Activated CD4-positive, alpha-beta T cell treated with anti-CD3 and anti-CD28 coated beads for 36 hours (primary cell): ENCODE measurements at regions of chr10 and their contacts with region 1.

Region 1: DNA sequence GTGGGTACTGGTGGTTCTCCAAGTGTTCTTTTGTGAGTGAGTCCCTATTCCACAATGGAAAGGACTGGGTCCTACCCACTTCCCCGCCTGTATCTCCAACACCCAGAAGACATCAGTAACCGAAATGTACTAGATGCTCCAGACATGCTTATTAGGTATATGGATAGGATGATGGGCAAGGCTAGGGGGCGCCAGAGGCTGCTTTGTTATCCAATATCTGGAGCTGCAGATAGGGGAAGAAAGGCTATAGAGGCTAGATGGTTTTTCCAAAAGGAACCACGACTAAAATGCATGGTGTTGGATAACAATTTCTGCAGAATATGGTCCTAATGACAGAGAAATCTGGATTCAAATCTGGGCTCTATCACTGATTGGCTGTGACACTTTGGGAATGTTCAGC is 56.2 kb upstream of the TM9SF3 start:
- DNase-seq: peak; percentile 88
- ATAC-seq: peak; percentile 80
- H3K4me3 Mint-ChIP-seq: no peak overlapping the region
- H3K27ac Mint-ChIP-seq: no peak overlapping the region
- H3K4me1 Mint-ChIP-seq: peaks cover 22% of the 10 kb centered on the region
- H3K27me3 Mint-ChIP-seq: no peaks in the 10 kb centered on the region

Region 2: DNA sequence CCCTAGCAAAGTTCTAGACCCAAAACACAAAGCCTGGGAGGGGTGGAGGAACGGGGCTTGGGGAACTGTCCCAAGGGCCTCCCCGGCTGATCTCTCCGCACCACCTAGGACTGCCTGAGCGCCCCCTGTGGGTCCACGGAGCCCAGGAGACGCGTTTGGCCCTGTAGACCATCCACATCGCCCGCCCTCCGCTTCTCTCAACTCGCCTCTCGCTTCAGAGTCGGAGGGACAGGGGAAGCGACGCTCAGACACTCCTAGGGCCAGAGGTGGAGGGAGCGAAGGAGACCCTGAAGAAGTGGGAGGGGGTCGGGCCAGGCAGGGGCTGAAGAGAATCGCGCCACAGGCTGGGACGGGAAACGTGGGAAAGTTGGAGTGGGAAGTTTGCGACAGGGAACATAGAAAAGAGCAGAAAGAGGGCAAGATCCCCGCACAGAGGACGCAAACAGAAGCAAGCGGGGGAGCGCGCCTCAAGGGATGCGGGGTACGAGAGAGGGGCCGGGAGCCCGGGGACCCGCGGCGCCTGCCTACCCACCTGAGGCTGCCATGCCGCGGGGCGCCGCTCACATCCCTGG is 77.0 kb after region 1 on chr10:
- CTCF ChIA-PET with region 1: no interaction called
- POLR2A ChIA-PET with region 1: no interaction called
- intact Hi-C with region 1: loop called (anchors 1 to 2 kb)
- DNase-seq: peak; percentile 77
- ATAC-seq: peak; percentile 68
- H3K4me3 Mint-ChIP-seq: peak overlapping the region; percentile 93
- H3K27ac Mint-ChIP-seq: peak overlapping the region; percentile 84
- H3K4me1 Mint-ChIP-seq: peaks cover 12% of the 10 kb centered on the region
- H3K27me3 Mint-ChIP-seq: peaks cover 2% of the 10 kb centered on the region

Region 3: GRCh38 chr10:96765406-96766240 is 122.7 kb after region 1 on chr10:
- CTCF ChIA-PET with region 1: no interaction called
- POLR2A ChIA-PET with region 1: no interaction called
- intact Hi-C with region 1: loop called in 1 of 2 experiments (anchors 1 kb)
- DNase-seq: peak; percentile 88
- ATAC-seq: peak; percentile 96
- H3K4me3 Mint-ChIP-seq: no peak overlapping the region
- H3K27ac Mint-ChIP-seq: no peak overlapping the region
- H3K4me1 Mint-ChIP-seq: no peaks in the 10 kb centered on the region
- H3K27me3 Mint-ChIP-seq: no peaks in the 10 kb centered on the region

Region 4: DNA sequence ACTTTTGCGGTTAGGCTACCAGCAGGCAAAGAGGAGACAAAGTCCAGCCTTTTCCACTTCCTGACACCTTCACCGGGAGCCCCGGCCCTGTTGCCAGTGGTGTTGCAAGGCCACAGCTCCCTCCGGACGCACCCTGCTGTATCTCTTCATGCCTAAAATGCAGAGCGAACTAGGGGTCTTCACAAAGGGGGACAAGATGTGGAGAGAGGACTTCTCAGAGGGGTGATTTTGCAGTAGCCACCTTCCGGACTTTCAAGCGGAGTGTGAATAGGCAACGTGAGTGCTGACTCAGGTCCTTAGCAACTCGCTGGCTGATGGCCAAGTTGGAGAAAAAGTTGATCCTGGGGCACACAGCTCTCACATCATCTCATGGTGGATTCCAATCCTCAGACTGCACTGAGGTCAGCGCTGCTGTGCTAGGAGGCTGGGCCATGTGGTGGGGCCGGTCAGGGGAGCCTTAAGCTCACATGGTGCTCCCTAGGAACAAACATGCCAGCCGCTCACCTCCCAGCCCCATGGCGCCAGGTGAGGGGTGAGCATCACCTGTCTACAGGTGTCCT is 355.4 kb after region 1 on chr10:
- CTCF ChIA-PET with region 1: no interaction called
- POLR2A ChIA-PET with region 1: no interaction called
- intact Hi-C with region 1: no loop called
- DNase-seq: no peak
- ATAC-seq: no peak
- H3K4me3 Mint-ChIP-seq: no peak overlapping the region
- H3K27ac Mint-ChIP-seq: no peak overlapping the region
- H3K4me1 Mint-ChIP-seq: no peaks in the 10 kb centered on the region
- H3K27me3 Mint-ChIP-seq: no peaks in the 10 kb centered on the region

Region 5: GRCh38 chr10:97243836-97244235 is 600.9 kb after region 1 on chr10:
- CTCF ChIA-PET with region 1: no interaction called
- POLR2A ChIA-PET with region 1: no interaction called
- intact Hi-C with region 1: no loop called
- DNase-seq: no peak
- ATAC-seq: no peak
- H3K4me3 Mint-ChIP-seq: no peak overlapping the region
- H3K27ac Mint-ChIP-seq: no peak overlapping the region
- H3K4me1 Mint-ChIP-seq: no peaks in the 10 kb centered on the region
- H3K27me3 Mint-ChIP-seq: no peaks in the 10 kb centered on the region